ENCODE measurements at regions of chr2 and their contacts with region 1.

Region 1: DNA sequence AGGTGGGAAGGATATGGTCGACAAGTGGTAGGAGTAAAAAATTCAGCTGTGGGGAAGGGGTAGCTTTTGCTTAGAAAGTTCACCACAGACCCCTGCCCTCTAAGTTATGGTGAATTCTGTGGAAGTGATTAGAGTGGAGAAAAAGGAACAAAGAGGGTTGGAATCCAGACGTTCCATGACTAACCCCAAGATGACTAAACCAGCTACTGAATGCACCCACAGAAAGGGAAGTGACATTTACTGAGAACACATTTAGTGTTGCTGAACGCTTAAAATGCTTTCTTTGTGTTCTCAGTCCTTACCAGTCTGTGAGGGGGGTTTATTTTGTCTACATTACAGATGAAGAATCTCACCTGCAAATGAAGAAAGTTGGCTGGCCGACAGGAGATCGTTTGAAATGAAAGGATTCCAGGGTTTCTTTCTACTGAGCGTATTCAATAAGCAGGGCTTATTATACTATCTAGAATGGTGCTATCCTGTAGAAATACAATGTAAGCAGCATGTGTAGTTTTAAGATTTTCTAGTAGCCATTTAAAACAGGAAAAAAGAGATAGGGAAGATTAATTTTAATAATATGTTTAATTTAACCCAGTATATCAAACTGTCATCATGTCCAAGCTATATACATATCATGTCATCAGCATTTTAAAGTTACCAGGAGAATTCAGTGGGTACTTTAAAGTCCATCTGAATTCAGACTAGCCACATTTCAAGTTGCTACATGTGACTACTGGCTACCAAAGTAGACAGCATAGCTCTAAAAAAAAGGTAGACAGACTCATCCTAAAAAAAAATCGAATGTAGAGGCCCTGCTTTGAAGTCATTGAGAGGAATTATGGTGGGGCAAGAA is 60.1 kb downstream of the LIMS1 start:
- DNase-seq: no peak
- H3K4me3 Mint-ChIP-seq: peak overlapping the region; percentile 38
- H3K27ac Mint-ChIP-seq: peak overlapping the region; percentile 73
- H3K4me1 Mint-ChIP-seq: peaks cover 48% of the 10 kb centered on the region
- H3K27me3 Mint-ChIP-seq: no peaks in the 10 kb centered on the region

Region 2: GRCh38 chr2:108565778-108566375 is 28.5 kb before region 1 on chr2:
- CTCF ChIA-PET with region 1: no interaction called
- POLR2A ChIA-PET with region 1: no interaction called
- intact Hi-C with region 1: no loop called
- DNase-seq: peak; percentile 34
- H3K4me3 Mint-ChIP-seq: no peak overlapping the region
- H3K27ac Mint-ChIP-seq: peak overlapping the region; percentile 48
- H3K4me1 Mint-ChIP-seq: peaks cover 12% of the 10 kb centered on the region
- H3K27me3 Mint-ChIP-seq: no peaks in the 10 kb centered on the region

Region 3: GRCh38 chr2:108629417-108629816 is 35.1 kb after region 1 on chr2:
- CTCF ChIA-PET with region 1: interaction called, 3 read pairs
- POLR2A ChIA-PET with region 1: interaction called, 3 read pairs
- intact Hi-C with region 1: loop called (anchors 5 kb)
- DNase-seq: no peak
- H3K4me3 Mint-ChIP-seq: peak overlapping the region; percentile 25
- H3K27ac Mint-ChIP-seq: peak overlapping the region; percentile 85
- H3K4me1 Mint-ChIP-seq: peaks cover 83% of the 10 kb centered on the region
- H3K27me3 Mint-ChIP-seq: no peaks in the 10 kb centered on the region

Region 4: GRCh38 chr2:108637304-108637669 is 42.9 kb after region 1 on chr2:
- CTCF ChIA-PET with region 1: interaction called, 34 read pairs
- POLR2A ChIA-PET with region 1: no interaction called
- intact Hi-C with region 1: loop called (anchors 1 kb)
- DNase-seq: no peak
- H3K4me3 Mint-ChIP-seq: no peak overlapping the region
- H3K27ac Mint-ChIP-seq: peak overlapping the region; percentile 76
- H3K4me1 Mint-ChIP-seq: peaks cover 85% of the 10 kb centered on the region
- H3K27me3 Mint-ChIP-seq: no peaks in the 10 kb centered on the region